Panc1 (cell line): ENCODE measurements at regions of chr7 and their contacts with region 1.

Region 1: DNA sequence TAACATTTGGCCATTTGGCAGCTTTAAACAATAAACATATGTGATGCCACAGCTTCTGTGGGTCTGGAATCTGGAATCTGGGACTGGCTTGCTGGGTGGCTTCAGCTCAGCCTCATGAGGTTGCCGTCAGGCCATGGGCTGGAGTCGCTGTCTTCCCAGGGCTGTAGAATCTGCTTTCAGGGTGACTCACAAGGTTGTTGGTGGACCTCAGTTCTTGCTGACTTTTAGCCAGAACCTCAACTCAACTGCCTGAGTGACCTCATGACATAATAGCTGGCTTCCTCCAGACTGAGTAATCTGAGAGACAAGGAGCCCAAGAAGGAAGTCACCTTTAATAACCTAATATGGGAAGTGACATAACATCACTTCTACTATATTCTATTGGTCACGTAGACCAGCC is 44.6 kb upstream of the TSPAN13 start:
- DNase-seq: peak; percentile 55
- ATAC-seq: no peak; the same call in 1 of the 2 replicates
- H3K4me3 ChIP-seq: no peak overlapping the region
- H3K27ac ChIP-seq: no peak overlapping the region
- H3K4me1 ChIP-seq: no peaks in the 10 kb centered on the region
- H3K27me3 ChIP-seq: no peaks in the 10 kb centered on the region
- CTCF ChIP-seq: no peak

Region 2: DNA sequence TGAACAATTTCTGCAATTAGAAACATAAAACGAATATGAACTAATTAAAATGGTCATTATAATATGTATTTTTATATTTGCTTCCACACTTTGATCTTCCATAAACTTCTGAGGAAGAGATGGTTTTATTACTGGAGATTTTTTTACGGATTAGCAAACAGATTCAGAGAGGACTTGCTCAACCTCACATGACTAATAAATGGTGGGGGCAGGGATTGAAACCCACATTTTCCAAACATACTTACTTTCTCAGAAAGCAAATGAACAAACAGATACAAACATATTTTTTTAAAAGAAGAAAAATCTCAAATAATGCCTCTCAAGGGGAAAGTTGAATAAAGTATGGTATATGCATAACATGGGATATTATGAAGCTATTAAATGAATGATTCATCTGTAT is 81.7 kb before region 1 on chr7:
- CTCF ChIA-PET with region 1: no interaction called
- POLR2A ChIA-PET with region 1: no interaction called
- in situ Hi-C with region 1: no loop called
- intact Hi-C with region 1: no loop called
- DNase-seq: no peak
- ATAC-seq: no peak
- H3K4me3 ChIP-seq: no peak overlapping the region
- H3K27ac ChIP-seq: no peak overlapping the region
- H3K4me1 ChIP-seq: no peaks in the 10 kb centered on the region
- H3K27me3 ChIP-seq: no peaks in the 10 kb centered on the region
- CTCF ChIP-seq: no peak

Region 3: DNA sequence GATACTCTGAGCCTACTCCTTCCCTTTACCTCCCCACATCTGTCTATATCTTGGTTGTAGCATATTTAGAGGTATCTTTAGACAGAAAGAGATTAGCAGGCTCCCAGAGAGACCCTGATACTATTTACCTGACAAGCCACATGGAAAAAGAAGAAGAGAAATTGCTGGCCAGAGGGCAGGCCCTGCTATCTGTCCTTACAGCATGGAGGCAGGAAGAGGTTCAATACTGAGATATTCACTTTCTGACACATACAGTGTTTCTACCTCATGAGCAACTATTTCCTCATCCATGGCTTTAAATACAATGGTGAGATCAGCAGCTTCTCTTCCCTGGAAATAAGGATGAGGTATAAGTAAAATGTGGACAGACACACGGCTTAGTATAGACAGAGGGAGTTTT is 10.7 kb after region 1 on chr7:
- CTCF ChIA-PET with region 1: no interaction called
- POLR2A ChIA-PET with region 1: interaction called, 11 read pairs
- in situ Hi-C with region 1: no loop called
- intact Hi-C with region 1: no loop called
- DNase-seq: no peak
- ATAC-seq: peak; percentile 38; the same call in 1 of the 2 replicates
- H3K4me3 ChIP-seq: no peak overlapping the region
- H3K27ac ChIP-seq: no peak overlapping the region
- H3K4me1 ChIP-seq: no peaks in the 10 kb centered on the region
- H3K27me3 ChIP-seq: no peaks in the 10 kb centered on the region
- CTCF ChIP-seq: no peak